MCF 10A (cell line): ENCODE measurements at regions of chr22 and their contacts with region 1.

Region 1: GRCh38 chr22:41381329-41382097 is at the start of gene TEF:
- DNase-seq: peak; percentile 97
- H3K4me3 Mint-ChIP-seq: peak within 1 kb of the TSS; percentile 78
- H3K27ac Mint-ChIP-seq: peak within 1 kb of the TSS; percentile 95
- H3K4me1 Mint-ChIP-seq: peaks cover 6% of the 10 kb centered on the region
- H3K27me3 Mint-ChIP-seq: no peaks in the 10 kb centered on the region
- CTCF ChIP-seq: no peak
- total RNA-seq, gene TEF: 2.2 and 4.2 TPM in 2 replicates

Region 2: GRCh38 chr22:41280066-41280465 is 101.4 kb before region 1 on chr22:
- CTCF ChIA-PET with region 1: no interaction called
- POLR2A ChIA-PET with region 1: interaction called, 35 read pairs
- intact Hi-C with region 1: loop called (anchors 10 kb)
- DNase-seq: peak; percentile 95
- H3K4me3 Mint-ChIP-seq: no peak overlapping the region
- H3K27ac Mint-ChIP-seq: peak overlapping the region; percentile 81
- H3K4me1 Mint-ChIP-seq: peaks cover 19% of the 10 kb centered on the region
- H3K27me3 Mint-ChIP-seq: no peaks in the 10 kb centered on the region
- CTCF ChIP-seq: no peak

Region 3: GRCh38 chr22:41301105-41302020 is 80.2 kb before region 1 on chr22 and contains the start of gene ZC3H7B:
- CTCF ChIA-PET with region 1: no interaction called
- POLR2A ChIA-PET with region 1: interaction called, 24 read pairs
- intact Hi-C with region 1: no loop called
- DNase-seq: peak; percentile 82
- H3K4me3 Mint-ChIP-seq: peak within 1 kb of the TSS; percentile 75
- H3K27ac Mint-ChIP-seq: peak within 1 kb of the TSS; percentile 90
- H3K4me1 Mint-ChIP-seq: peaks cover 26% of the 10 kb centered on the region
- H3K27me3 Mint-ChIP-seq: no peaks in the 10 kb centered on the region
- CTCF ChIP-seq: peak; percentile 38
- total RNA-seq, gene ZC3H7B: 42.9 and 53.4 TPM in 2 replicates

Region 4: DNA sequence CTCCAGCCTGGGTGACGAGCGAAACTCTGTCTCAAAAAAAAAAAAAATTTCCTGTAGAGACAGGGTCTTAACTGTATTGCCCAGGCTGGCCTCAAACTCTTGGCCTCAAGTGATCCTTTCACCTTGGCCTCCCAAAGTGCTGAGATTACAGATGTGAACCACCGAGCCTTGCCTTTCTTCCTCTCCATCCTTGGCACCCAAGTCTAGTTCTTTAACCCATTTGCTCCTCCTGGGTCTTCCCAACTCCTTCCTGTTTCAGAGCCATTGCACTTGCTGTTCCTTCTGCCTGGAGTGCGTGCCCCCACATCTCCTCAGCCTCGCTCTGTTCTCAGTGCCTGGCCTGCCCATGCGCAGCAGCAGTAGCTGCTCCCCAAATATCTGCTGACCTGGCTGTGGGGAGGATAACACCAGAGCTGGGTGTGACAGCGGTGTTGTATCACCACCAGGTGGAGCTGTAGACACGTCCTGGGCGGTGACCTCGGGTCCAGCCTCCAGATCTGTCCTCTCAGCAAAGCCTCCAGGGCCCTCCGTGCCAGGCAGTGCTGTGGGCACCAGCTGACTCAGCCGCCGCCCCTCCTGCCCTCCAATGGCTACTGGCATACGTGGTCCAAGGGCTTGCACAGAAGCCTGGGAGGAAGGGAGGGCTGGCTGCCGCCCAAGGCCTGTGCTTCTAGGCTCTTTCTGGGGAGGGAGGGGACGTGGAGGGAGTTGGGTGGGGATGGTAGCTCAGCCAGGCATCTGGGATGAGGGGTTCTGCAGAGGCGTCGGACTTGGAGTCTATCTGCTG is 22.2 kb after region 1 on chr22:
- CTCF ChIA-PET with region 1: interaction called, 4 read pairs
- POLR2A ChIA-PET with region 1: interaction called, 28 read pairs
- intact Hi-C with region 1: no loop called
- DNase-seq: peak; percentile 93
- H3K4me3 Mint-ChIP-seq: no peak overlapping the region
- H3K27ac Mint-ChIP-seq: peak overlapping the region; percentile 8
- H3K4me1 Mint-ChIP-seq: peaks cover 13% of the 10 kb centered on the region
- H3K27me3 Mint-ChIP-seq: no peaks in the 10 kb centered on the region
- CTCF ChIP-seq: peak; percentile 86

Region 5: DNA sequence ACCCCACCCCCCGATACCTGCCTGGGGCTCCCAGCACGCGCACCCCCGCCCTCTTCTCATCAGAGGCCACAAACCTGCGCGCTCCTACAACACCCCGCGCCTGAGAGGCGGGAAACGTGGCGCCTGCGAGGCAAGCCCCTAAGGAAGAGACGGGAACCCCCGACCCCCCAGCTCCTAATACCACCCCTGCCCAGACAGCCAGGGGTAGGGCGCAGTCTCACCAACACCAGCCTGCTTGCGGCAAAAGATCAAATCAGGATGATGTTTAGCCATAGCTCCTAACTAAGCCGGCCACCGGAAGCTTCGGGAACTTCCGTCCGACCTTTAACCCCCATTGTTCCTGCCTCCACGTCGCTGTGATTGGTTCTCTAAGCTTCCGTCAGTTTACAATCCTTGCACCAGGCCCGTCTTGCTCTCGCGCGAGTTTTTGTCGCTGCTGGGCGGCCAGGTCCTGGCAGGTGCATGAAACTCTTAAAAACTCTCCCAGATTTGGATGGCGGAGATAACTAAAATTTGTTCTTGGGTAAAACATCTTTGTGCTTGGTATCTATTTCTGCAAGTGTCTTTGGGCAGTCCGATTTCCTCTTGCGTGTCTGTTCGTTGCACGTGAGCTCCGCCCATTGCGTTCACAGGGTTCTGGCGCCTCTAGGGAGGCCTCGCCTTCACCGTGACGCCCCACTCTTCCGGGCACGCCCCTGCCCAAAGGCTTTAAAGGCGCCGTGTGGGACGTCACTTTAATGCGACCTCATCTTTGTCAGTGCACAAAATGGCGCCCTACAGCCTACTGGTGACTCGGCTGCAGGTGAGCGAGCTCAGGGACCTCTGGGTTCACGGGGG is 87.1 kb after region 1 on chr22 and contains the starts of genes ACO2 and PHF5A:
- CTCF ChIA-PET with region 1: no interaction called
- POLR2A ChIA-PET with region 1: interaction called, 42 read pairs
- intact Hi-C with region 1: no loop called
- DNase-seq: peak; percentile 98
- H3K4me3 Mint-ChIP-seq: peak within 1 kb of the TSS; percentile 96
- H3K27ac Mint-ChIP-seq: peak within 1 kb of the TSS; percentile 100
- H3K4me1 Mint-ChIP-seq: peaks cover 33% of the 10 kb centered on the region
- H3K27me3 Mint-ChIP-seq: no peaks in the 10 kb centered on the region
- CTCF ChIP-seq: no peak
- total RNA-seq, gene ACO2: 105 and 109 TPM in 2 replicates
- total RNA-seq, gene PHF5A: 62.3 and 68.8 TPM in 2 replicates

Region 6: GRCh38 chr22:41565403-41566054 is 184.0 kb after region 1 on chr22:
- CTCF ChIA-PET with region 1: no interaction called
- POLR2A ChIA-PET with region 1: no interaction called
- intact Hi-C with region 1: no loop called
- DNase-seq: peak; percentile 82
- H3K4me3 Mint-ChIP-seq: no peak overlapping the region
- H3K27ac Mint-ChIP-seq: no peak overlapping the region
- H3K4me1 Mint-ChIP-seq: peaks cover 8% of the 10 kb centered on the region
- H3K27me3 Mint-ChIP-seq: no peaks in the 10 kb centered on the region
- CTCF ChIP-seq: no peak